ENCODE measurements at regions of chr16 and their contacts with region 1.

Region 1: DNA sequence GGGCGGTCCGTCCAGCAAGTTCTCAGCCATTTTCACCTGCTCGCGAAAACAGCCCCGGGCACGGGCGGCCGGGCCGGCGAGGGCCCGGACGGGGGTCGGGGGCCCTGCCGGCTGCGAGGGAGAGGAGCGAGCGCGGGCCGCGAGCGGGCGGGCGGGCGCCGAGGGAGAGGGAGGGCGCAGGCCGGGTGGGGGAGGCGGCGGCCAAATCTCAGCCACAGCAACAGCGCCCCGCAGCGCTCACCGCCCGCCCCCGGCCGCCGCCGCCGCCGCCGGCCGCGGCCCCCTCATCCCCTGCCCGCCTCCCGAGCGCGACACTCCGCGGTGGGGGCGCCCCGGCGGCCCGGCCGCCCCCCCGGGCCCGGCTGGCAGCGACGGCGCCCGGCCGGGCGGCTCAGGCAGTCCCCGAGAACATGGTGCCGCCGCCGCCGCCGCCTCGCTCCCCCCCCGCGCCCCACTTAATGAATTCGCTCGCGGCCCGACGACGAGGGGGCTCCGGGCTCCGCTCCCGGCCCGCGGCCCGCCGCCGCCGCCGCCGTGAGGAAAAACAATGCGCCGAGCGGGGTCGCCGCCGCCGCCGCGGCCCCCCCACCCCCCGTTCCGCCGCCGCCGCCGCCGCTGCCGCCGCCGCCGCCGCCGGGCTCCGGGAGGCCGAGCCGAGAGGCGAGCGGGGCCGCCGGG is 487 bp downstream of the CREBBP start:
- DNase-seq: peak; percentile 80 to 83 (median 83)
- ATAC-seq: peak; percentile 80
- H3K4me3 ChIP-seq: peak overlapping the region; percentile 50
- H3K4me1 ChIP-seq: peaks cover 28% of the 10 kb centered on the region
- CTCF ChIP-seq: no peak

Region 2: DNA sequence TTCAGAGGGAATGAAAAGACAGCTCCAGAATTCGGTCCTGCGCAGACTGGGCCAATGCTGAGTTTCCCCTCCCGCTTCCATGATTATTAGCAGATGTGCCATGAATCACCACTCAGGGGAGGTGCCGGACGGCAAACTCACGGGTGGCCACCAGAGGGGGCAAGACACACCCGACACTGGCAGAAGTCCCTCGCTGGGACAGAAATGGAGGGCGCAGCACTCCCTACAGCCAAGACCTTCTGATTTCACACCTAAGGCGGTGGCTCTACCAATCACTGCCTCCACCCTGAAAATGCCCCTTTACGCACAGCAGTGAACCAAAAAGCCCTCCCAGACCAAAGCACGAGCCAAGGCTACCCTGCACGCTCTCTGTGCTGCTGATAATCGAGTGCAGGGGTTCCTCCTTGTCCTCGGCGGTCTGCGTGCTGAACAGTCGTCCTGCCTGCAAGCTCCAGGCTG is 189.5 kb before region 1 on chr16:
- intact Hi-C with region 1: loop called in 1 of 2 experiments (anchors 10 kb)
- DNase-seq: peak; percentile 86 to 92 (median 92)
- ATAC-seq: peak; percentile 99
- H3K4me3 ChIP-seq: no peak overlapping the region
- H3K4me1 ChIP-seq: peaks cover 6% of the 10 kb centered on the region
- CTCF ChIP-seq: peak; percentile 89